ENCODE measurements at regions of chr2 and their contacts with region 1.

Region 1: DNA sequence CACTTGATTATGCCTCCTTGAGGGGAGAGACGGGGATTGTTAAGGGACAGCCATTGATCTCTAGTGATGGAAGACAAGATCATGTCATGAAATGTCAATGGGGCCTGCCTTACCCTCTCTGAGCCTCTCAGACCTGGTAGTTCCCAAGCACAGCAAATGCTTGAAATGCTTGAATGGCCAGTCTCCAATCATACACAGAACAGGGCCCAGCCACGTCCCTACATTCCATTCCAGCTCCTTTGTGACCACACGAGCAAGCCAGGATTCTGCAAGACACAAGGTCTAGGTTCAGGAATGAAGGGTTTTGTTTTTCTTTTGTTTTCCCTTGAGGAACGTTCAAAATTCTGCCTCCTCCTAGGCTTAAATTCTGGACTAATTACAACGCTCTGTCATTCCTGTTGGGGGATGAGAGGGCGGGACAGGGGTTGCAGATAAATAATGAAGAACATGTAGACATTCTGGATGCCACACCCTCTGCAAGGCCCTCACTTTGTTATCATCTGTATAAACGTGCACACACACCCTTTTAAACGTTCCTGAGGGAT is 98.1 kb upstream of the YPEL5 start:
- DNase-seq: no peak
- H3K27ac ChIP-seq: no peak overlapping the region
- CTCF ChIP-seq: no peak

Region 2: DNA sequence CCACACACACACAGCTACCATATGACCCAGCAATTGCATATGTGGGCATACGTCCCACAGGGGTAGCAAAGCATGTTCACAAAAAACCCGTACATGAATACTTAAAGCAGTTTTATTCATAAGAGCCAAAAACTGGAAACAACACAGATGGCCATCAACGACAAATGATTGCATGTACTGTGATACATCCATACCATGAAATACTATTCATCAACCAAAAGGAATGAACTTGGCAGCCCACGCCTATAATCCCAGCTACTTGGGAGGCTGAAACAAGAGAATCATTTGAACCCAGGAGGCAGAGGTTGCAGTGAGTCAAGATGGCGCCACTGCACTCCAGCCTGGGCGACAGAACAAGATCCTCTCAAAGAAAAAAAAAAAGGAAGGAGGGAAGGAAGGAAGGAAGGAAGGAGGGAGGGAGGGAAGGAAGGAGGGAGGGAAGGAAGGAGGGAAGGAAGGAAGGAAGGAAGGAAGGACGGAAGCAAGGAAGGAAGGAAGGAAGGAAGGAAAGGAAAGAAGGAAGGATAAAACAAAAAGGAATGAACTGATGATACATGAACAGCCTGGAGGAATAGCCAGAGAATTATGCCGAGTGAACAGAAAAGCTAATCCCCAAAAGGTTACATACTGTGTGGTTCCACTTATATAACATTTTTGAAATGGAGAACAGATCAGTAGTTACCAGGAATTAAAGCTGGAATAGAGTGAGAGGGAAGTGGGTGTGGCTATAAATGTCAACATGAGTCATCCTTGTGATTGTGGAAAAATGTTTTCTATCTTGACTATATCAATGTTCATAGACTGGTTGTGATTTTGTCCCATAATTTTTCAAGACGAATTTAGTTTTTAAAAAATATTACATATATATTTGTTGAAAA is 78.5 kb after region 1 on chr2:
- CTCF ChIA-PET with region 1: interaction called, 11 read pairs
- POLR2A ChIA-PET with region 1: no interaction called
- DNase-seq: peak; percentile 53
- H3K27ac ChIP-seq: no peak overlapping the region
- CTCF ChIP-seq: no peak

Measured in RWPE1 (cell line).